Panc1 (cell line): ENCODE measurements at regions of chr19 and their contacts with region 1.

Region 1: GRCh38 chr19:11035441-11036377 is 53.6 kb upstream of the LDLR start:
- DNase-seq: peak; percentile 57
- ATAC-seq: peak; percentile 97
- H3K4me3 ChIP-seq: no peak overlapping the region
- H3K27ac ChIP-seq: no peak overlapping the region
- H3K4me1 ChIP-seq: no peaks in the 10 kb centered on the region
- H3K27me3 ChIP-seq: no peaks in the 10 kb centered on the region
- CTCF ChIP-seq: peak; percentile 97

Region 2: DNA sequence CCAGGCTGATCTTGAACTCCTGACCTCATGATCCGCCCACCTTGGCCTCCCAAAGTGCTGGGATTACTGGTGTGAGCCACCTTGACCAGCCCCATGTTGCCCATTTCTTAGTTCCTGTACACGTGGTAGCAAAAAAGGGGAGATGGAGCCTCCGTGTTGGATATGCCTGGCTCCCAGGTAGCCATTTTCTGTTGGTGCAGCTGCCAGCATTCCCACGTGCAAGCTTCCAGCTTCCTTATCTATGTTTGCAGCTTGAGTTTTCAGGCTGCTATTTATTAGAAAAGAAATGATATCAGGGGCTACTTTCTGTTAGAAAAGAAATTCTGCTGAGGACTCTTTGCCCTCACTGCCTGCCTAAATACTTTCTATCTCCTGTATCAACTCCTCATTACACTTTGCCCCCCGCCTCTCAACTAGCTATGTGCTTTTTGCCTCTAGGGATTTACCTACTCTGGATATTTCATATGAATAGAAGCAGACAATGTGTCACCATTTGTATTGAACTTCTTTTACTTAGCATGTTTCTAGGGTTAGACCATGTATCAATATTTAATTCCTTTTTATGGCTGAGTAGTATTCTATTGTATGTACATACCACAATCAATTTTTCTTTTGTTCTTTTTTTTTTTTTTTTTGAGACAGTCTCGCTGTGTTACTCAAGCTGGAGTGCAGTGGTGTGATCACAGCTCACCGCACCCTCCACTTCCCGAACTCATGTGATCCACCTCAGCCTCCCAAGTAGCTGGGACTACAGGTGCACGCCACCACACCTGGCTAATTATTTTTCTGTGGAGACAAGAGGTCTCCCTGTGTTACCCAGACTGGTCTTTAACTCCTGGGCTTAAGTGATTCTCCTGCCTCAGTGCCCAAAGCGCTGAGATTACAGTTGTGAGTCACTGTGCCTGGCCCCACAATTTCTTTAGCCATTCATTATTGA is 196.3 kb before region 1 on chr19:
- CTCF ChIA-PET with region 1: no interaction called
- POLR2A ChIA-PET with region 1: no interaction called
- in situ Hi-C with region 1: no loop called
- intact Hi-C with region 1: no loop called
- DNase-seq: no peak
- ATAC-seq: no peak
- H3K4me3 ChIP-seq: no peak overlapping the region
- H3K27ac ChIP-seq: no peak overlapping the region
- H3K4me1 ChIP-seq: no peaks in the 10 kb centered on the region; the same call in 1 of the 2 replicates
- H3K27me3 ChIP-seq: no peaks in the 10 kb centered on the region
- CTCF ChIP-seq: no peak

Region 3: GRCh38 chr19:11050323-11051114 is 14.8 kb after region 1 on chr19:
- CTCF ChIA-PET with region 1: no interaction called
- POLR2A ChIA-PET with region 1: no interaction called
- in situ Hi-C with region 1: no loop called
- intact Hi-C with region 1: no loop called
- DNase-seq: no peak
- ATAC-seq: peak; percentile 27; the same call in 1 of the 2 replicates
- H3K4me3 ChIP-seq: no peak overlapping the region
- H3K27ac ChIP-seq: no peak overlapping the region
- H3K4me1 ChIP-seq: no peaks in the 10 kb centered on the region
- H3K27me3 ChIP-seq: no peaks in the 10 kb centered on the region
- CTCF ChIP-seq: no peak

Region 4: DNA sequence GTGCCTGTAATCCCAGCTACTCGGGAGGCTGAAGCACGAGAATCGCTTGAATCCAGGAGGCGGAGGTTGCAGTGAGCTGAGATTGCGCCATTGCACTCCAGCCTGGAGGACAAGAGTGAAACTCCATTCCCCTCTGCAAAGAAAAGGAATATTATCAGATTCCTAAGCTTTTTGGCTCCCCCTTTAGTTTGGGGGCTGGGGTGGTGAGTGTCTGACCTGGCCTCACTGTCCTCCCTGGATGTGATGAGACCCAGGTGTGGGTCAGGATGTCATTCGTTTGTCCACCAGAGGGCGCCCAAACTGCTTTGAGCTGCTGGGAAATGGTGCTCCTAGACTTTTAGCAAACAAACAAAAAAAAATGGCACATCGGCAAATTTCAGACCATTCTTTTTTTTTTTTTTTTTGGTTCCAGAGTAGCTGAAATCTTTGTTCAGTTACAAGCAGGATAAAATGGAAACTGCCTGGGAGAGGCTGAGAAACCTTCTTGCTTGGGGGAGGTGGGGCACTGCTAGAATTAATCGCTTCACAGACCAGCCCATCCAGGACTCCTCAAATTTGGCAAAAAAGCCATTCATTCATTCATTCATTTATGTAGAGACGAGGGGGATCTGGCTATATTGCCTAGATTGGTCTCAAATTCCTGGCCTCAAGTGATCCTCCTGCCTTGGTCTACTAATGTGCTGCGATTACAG is 90.4 kb after region 1 on chr19:
- CTCF ChIA-PET with region 1: interaction called, 8 read pairs
- POLR2A ChIA-PET with region 1: no interaction called
- in situ Hi-C with region 1: no loop called
- intact Hi-C with region 1: loop called (anchors 10 kb)
- DNase-seq: no peak
- ATAC-seq: peak; percentile 73
- H3K4me3 ChIP-seq: no peak overlapping the region
- H3K27ac ChIP-seq: no peak overlapping the region
- H3K4me1 ChIP-seq: no peaks in the 10 kb centered on the region; the same call in 1 of the 2 replicates
- H3K27me3 ChIP-seq: no peaks in the 10 kb centered on the region
- CTCF ChIP-seq: peak; percentile 85